Posterior cingulate gyrus (tissue), 11 donors: ENCODE measurements at regions of chrX and their contacts with region 1.

Region 1: GRCh38 chrX:51420610-51421009 is 75.8 kb downstream of the NUDT11 start:
- DNase-seq: peak in 1 of 10 donors; percentile 4

Region 2: DNA sequence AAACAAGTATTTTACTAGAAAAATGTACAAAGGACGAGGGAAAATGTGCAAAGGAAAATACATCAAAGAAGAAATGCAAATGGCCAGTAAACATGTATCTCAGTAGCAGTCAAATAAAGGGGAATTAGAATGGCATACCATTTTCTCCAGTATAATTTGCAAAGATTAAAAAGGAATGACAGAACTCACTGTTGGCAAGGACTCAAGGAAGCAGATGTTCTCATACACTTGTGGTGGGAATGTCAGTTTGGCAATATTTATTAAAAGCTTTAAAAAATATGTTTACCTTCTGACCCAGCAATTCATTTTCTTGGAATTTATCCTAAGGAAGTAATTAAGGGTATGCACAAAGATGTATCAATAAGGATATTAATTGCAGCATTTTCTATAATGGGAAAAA is 1490.6 kb before region 1 on chrX:
- intact Hi-C with region 1: no loop called
- DNase-seq: no peak

Region 3: DNA sequence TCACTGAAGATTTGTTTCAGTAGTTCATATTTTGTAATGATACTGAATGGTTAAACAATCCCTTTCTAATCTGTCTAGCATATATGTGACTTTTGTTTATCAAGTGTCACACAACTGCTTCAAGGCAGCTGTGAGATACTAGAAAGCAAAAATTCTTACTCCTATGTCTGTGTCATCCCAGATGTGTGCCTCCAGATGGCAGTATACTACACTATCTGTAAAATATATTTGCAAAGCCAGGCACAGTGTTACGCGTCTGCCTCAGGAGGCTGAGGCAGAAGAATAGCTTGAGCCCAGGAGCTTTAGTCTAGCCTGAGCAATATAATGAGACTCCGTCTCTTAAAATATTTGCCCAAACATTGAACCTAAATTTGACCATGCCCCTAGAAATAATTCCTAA is 84.0 kb before region 1 on chrX:
- intact Hi-C with region 1: loop called (anchors 5 kb)
- DNase-seq: peak in 1 of 10 donors; percentile 73

Region 4: GRCh38 chrX:52504551-52504950 is 1083.9 kb after region 1 on chrX:
- intact Hi-C with region 1: no loop called
- DNase-seq: peak in 2 of 10 donors; percentile 1 to 10